Activated CD4-positive, alpha-beta memory T cell treated with anti-CD3 and anti-CD28 coated beads, Interleukin-2, amount 10 ng/mL, durations not matched to agents 7 days and 5 days (primary cell): ENCODE measurements at regions of chrX and their contacts with region 1.

Region 1: DNA sequence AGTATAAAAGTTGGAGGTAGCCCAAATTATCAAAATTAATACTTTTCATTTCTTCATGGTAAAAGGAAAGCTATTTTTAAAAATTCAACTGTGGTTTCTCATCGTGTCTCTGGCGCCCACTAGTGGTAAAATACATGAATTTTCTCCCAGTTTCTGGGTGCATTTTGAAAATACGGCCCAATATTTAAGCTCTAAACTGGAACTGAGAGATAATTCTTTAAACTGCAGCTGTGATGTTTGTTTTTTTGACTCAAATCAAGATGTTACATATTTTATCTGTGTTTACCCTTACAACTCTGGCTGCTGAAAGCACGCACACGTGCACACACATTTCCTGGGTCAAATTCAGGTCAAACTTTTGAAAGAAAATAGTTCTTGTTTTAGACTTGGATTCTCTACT is 123.9 kb upstream of the ACSL4 start:
- DNase-seq: no peak
- H3K4me3 Mint-ChIP-seq: no peak overlapping the region
- H3K27ac Mint-ChIP-seq: no peak overlapping the region
- H3K4me1 Mint-ChIP-seq: peaks cover 5% of the 10 kb centered on the region
- H3K27me3 Mint-ChIP-seq: no peaks in the 10 kb centered on the region

Region 2: GRCh38 chrX:109485470-109486340 is 371.3 kb before region 1 on chrX:
- CTCF ChIA-PET with region 1: interaction called, 13 read pairs
- POLR2A ChIA-PET with region 1: no interaction called
- DNase-seq: peak; percentile 58
- H3K4me3 Mint-ChIP-seq: no peak overlapping the region
- H3K27ac Mint-ChIP-seq: no peak overlapping the region
- H3K4me1 Mint-ChIP-seq: no peaks in the 10 kb centered on the region
- H3K27me3 Mint-ChIP-seq: peaks cover 3% of the 10 kb centered on the region

Region 3: GRCh38 chrX:109714340-109714958 is 142.5 kb before region 1 on chrX:
- CTCF ChIA-PET with region 1: interaction called, 67 read pairs
- POLR2A ChIA-PET with region 1: interaction called, 6 read pairs
- DNase-seq: no peak
- H3K4me3 Mint-ChIP-seq: no peak overlapping the region
- H3K27ac Mint-ChIP-seq: no peak overlapping the region
- H3K4me1 Mint-ChIP-seq: peaks cover 25% of the 10 kb centered on the region
- H3K27me3 Mint-ChIP-seq: no peaks in the 10 kb centered on the region

Region 4: GRCh38 chrX:109843963-109844751 is 12.8 kb before region 1 on chrX:
- CTCF ChIA-PET with region 1: interaction called, 12 read pairs
- POLR2A ChIA-PET with region 1: no interaction called
- DNase-seq: no peak
- H3K4me3 Mint-ChIP-seq: no peak overlapping the region
- H3K27ac Mint-ChIP-seq: no peak overlapping the region
- H3K4me1 Mint-ChIP-seq: peaks cover 19% of the 10 kb centered on the region
- H3K27me3 Mint-ChIP-seq: no peaks in the 10 kb centered on the region

Region 5: DNA sequence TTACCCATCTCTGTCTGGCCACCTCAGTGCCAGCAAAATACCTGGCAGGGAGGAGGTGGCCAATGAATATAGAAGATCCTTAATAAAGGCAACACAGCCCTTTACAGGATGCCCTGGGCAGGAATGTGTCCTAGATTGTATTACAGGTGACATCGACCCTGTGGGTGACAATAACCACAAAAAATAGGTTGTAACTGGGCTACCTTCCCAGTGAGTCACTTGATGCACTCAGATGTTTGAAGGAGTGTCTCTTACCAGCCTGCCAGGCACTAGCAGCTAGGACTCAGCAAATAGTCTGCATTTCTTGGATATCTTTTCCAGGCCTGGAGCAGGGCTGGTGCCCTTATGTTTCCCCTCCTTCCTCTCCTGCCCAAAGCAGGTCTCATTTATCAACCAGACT is 95.0 kb after region 1 on chrX:
- CTCF ChIA-PET with region 1: no interaction called
- POLR2A ChIA-PET with region 1: no interaction called
- DNase-seq: no peak
- H3K4me3 Mint-ChIP-seq: no peak overlapping the region
- H3K27ac Mint-ChIP-seq: no peak overlapping the region
- H3K4me1 Mint-ChIP-seq: peaks cover 12% of the 10 kb centered on the region
- H3K27me3 Mint-ChIP-seq: no peaks in the 10 kb centered on the region